Common myeloid progenitor, CD34-positive (primary cell): ENCODE measurements at regions of chr19 and their contacts with region 1.

Region 1: GRCh38 chr19:47210689-47211316 is 20.2 kb downstream of the BBC3 start:
- DNase-seq: peak; percentile 80 to 88 (median 81)
- H3K4me3 ChIP-seq: no peak overlapping the region
- H3K27ac ChIP-seq: peak overlapping the region; percentile 54 to 82
- H3K4me1 ChIP-seq: peaks cover 2 to 13% (median 11%) of the 10 kb centered on the region in 4 experiments
- H3K27me3 ChIP-seq: no peaks in the 10 kb centered on the region

Region 2: DNA sequence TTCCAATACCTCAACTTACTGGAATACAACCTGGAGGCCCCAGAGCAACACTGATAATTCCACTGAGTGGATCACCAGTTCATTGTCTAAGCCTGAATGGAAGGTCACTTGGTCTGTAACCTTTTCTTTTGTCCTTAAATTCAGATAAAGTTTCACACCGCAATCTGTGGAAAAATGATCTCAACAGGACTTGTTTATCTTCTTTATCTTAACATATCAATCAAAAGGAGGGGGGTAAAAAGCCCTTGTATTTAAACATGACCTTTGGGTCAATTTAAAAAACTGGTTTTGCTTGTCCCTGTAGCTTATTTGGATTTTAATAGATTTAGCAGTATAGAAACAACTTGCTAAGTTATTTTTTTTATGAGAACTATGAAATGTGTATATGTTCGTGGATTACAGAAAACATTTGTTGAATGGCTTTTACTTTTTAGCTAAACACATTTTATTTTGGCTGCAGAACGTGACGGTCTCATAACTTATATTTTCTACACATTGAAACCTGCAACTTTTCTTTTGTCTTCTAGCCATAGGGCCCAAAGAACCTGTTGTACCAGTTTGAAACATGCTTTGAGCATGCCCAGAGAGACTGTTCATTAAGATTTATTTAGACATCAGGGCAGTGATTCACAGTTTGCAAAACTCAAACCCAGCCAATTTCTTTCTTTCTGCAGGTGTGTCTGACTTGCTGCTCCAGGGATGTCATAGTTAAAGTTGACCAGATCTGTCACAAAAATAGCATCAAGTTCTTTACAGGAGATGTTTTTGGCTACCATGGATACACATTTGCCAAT is 58.4 kb before region 1 on chr19:
- CTCF ChIA-PET with region 1: interaction called, 10 read pairs
- POLR2A ChIA-PET with region 1: no interaction called
- DNase-seq: no peak
- H3K4me3 ChIP-seq: no peak overlapping the region
- H3K27ac ChIP-seq: no peak overlapping the region
- H3K4me1 ChIP-seq: peaks cover 9 to 17% (median 15%) of the 10 kb centered on the region in 4 experiments
- H3K27me3 ChIP-seq: peaks cover 0 to 2% (median 0%) of the 10 kb centered on the region in 5 experiments

Region 3: DNA sequence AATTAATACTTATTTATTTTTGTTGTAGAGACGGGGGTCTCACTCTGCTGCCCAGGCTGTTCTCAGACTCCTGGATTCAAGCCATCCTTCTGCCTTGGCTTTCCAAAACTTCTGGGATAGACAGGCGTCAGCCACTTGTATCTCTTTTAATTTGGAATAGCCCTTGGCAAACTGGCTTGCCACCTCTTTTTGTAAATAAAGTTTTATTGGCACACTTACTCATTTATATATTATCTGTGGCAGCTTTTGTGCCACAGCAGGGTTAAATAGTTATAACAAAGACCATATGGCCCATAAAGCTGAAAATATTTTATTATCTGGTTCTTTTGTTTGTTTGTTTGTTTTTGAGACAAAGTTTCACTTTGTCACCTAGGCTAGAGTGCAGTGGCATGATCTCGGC is 10.3 kb before region 1 on chr19:
- CTCF ChIA-PET with region 1: interaction called, 31 read pairs
- POLR2A ChIA-PET with region 1: no interaction called
- DNase-seq: no peak
- H3K4me3 ChIP-seq: no peak overlapping the region
- H3K27ac ChIP-seq: no peak overlapping the region
- H3K4me1 ChIP-seq: no peaks in the 10 kb centered on the region
- H3K27me3 ChIP-seq: no peaks in the 10 kb centered on the region

Region 4: DNA sequence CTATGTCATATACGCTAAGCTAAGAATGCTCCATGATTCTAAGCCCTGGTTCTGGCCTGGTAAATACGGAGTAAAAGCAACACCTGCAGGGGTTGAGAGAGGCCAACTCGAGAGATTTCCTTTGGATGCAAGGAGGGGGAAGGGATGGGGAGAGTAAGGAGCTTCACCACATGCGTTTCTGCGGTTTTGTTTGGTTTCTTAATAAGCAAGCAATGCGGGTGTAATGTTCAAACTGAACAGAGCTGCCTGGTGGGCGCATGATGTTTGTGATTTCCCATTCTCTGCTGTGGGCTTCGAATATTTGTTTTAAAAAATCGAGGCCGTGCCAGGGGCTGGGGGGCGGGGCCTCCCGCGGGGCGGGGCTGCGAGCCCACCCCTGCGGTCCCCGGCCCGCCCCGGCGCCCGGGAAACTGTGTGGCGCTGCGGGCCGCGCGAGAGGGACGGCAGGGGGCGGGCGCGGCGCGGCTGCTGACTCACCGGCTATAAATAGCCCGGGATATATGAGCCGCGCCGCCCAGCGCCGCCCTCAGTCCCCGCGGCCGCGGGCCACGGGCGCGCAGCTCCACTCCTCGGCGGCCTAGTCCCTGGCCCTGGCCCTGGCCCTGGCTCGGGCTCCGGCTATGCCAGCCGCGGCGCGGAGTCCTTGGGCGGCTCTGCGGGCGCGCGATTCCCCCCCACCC is 15.1 kb after region 1 on chr19:
- CTCF ChIA-PET with region 1: interaction called, 78 read pairs
- POLR2A ChIA-PET with region 1: interaction called, 19 read pairs
- DNase-seq: peak; percentile 87 to 93 (median 93)
- H3K4me3 ChIP-seq: peak overlapping the region in 6 of 7 experiments; percentile 23 to 80 (median 62)
- H3K27ac ChIP-seq: peak overlapping the region in 1 of 2 experiments; percentile 83
- H3K4me1 ChIP-seq: peaks cover 5 to 52% (median 49%) of the 10 kb centered on the region in 4 experiments
- H3K27me3 ChIP-seq: peaks cover 0 to 30% (median 8%) of the 10 kb centered on the region in 5 experiments

Region 5: GRCh38 chr19:47324502-47324901 is 113.7 kb after region 1 on chr19:
- CTCF ChIA-PET with region 1: no interaction called
- POLR2A ChIA-PET with region 1: no interaction called
- DNase-seq: peak; percentile 43 to 50 (median 45)
- H3K4me3 ChIP-seq: no peak overlapping the region
- H3K27ac ChIP-seq: no peak overlapping the region
- H3K4me1 ChIP-seq: peaks cover 0 to 10% (median 8%) of the 10 kb centered on the region in 4 experiments
- H3K27me3 ChIP-seq: peaks cover 0 to 19% (median 2%) of the 10 kb centered on the region in 5 experiments